HAP-1 (cell line): ENCODE measurements at regions of chrX and their contacts with region 1.

Region 1: DNA sequence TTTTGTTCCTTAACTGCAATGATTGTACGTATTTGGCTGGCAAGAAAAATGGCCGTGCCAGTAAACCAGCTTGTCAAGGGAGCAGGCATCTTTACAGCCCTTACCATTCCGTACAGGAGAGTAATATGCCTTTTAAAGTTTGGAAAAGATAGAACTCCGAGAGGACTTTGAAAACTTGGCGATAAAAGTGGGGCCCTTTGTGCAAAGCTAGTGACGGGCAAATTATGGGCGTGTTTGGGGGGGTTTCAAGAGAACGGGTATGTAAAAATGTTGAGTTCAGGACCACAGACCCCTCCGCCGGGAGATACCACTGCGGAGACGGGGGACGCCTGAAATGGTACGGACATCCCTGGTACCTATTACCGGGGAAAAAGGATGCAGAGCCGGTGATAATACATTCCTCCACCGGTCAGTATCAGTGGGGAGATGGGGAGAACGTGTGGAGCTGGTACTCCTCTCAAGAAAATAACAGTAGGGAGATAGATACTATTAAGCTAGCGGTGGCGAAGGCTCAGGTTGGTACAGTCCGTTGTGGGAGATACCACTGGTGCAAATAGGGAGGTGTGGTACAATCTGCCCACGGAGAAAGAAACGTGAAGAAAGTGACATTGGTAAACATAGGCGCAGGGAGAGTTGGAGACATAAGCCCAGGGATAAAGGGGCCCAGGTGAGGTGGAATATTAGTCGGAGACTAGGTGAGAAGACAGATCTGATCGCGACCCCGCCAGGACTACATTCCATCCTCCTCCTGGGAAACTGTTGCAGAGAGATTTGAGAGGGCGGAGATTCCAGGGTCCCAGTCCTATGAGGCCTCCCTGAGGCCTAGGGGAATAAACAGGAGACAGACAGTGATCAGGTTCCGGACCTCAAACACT is 14.5 kb downstream of the SPACA5 start:
- DNase-seq: peak; percentile 87 to 92
- H3K4me3 ChIP-seq: peak overlapping the region; percentile 57
- H3K4me1 ChIP-seq: peaks cover 12% of the 10 kb centered on the region
- H3K27me3 ChIP-seq: no peaks in the 10 kb centered on the region

Region 2: GRCh38 chrX:47193475-47194193 is 827.6 kb before region 1 on chrX and contains the start of gene UBA1:
- in situ Hi-C with region 1: loop called (anchors 25 kb)
- DNase-seq: peak; percentile 94 to 98
- H3K4me3 ChIP-seq: peak within 1 kb of the TSS; percentile 99
- H3K4me1 ChIP-seq: peaks cover 38% of the 10 kb centered on the region
- H3K27me3 ChIP-seq: no peaks in the 10 kb centered on the region

Region 3: DNA sequence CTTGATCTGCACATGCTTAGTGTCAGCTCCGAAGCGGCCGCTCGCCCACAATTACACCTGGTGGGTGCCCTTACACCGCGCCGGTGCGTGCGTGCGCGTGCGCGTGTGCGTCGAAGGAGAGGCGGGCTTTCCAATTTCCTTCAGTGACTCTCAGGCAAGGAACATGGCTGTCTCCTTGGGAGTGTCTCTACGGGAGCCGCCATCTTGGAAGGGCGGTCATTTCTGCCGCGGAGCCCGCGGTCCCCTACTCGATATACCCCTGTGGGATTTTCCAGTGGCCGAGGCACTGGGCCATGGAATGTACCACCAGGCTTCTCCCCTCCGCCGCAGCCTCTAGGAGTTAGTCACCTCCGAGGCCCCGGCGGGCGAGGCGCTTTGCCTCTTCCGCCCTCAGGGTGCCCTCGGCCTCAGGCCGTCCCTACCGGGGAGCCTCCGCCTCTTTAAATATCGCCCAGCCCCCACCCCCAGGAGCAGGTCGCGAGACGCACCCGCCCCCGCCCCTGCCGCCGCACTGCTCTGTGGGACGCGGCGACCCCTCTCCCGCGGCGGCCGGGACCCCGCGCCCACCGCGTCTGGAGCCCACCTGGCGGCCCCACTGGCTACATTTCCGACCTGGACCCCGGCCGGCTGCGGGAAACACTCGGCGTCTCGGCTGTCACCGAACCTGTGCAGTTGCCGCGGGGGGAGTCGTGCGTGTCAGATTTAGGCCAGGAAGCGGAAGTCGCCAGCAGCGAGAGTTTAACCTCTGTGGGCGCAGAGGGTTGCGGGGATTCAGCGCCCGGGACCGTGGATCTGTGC is 538.6 kb before region 1 on chrX and contains the start of gene ZNF41:
- in situ Hi-C with region 1: loop called (anchors 25 kb)
- DNase-seq: peak; percentile 93
- H3K4me3 ChIP-seq: peak within 1 kb of the TSS; percentile 74
- H3K4me1 ChIP-seq: peaks cover 21% of the 10 kb centered on the region
- H3K27me3 ChIP-seq: no peaks in the 10 kb centered on the region

Region 4: DNA sequence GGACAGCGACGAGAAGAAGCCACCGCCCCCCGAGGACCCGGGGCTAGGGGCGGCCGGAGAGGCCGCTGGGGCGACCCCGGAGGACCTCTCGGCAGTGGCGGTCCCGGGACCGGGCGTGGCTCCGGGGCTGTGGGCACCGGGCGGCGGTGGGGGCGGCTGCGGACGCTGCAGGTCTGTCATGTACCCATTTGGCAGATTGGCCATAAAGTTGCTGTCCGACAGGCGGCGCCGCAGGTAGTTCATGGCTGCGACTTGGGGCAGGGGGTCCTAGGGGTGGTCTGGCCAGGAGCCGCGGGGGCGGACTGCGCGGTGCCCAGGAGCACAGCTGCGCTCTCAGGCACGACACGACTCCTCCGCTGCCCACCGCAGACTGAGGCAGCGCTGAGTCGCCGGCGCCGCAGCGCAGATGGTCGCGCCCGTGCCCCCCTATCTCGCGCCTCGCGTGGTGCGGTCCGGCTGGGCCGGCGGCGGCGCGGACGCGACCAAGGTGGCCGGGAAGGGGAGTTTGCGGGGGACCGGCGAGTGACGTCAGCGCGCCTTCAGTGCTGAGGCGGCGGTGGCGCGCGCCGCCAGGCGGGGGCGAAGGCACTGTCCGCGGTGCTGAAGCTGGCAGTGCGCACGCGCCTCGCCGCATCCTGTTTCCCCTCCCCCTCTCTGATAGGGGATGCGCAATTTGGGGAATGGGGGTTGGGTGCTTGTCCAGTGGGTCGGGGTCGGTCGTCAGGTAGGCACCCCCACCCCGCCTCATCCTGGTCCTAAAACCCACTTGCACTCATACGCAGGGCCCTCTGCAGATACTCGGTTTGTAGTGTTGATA is 401.6 kb before region 1 on chrX and contains the start of gene SYN1:
- in situ Hi-C with region 1: no loop called
- DNase-seq: peak; percentile 71 to 91
- H3K4me3 ChIP-seq: peak within 1 kb of the TSS; percentile 28
- H3K4me1 ChIP-seq: no peaks in the 10 kb centered on the region
- H3K27me3 ChIP-seq: peaks cover 7% of the 10 kb centered on the region; the same call in 1 of the 2 replicates

Region 5: DNA sequence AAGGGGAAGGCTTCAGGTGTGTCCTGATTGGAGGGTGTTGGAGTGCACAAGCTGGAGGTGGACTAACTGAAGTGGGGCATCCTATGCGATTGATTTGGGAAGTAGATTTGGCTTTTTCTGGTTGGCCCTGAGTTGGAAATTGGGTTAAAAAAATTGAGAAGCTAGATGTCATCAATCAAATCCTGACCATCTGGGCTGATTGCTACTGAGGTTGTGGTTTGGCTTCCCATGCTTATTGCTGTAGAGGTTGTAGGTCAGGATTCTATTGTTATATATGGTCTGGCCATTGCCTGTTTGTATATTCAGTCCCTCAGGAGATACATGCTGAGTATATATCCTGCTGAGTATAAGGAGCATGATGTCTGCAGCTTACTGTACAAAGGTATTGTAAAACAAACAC is 192.3 kb before region 1 on chrX:
- in situ Hi-C with region 1: loop called (anchors 10 kb)
- DNase-seq: no peak
- H3K4me3 ChIP-seq: no peak overlapping the region
- H3K4me1 ChIP-seq: no peaks in the 10 kb centered on the region
- H3K27me3 ChIP-seq: no peaks in the 10 kb centered on the region

Region 6: GRCh38 chrX:47854474-47854873 is 166.8 kb before region 1 on chrX:
- in situ Hi-C with region 1: loop called (anchors 5 kb)
- DNase-seq: peak; percentile 36 to 63
- H3K4me3 ChIP-seq: no peak overlapping the region
- H3K4me1 ChIP-seq: peaks cover 5% of the 10 kb centered on the region
- H3K27me3 ChIP-seq: no peaks in the 10 kb centered on the region